Motor neuron (in vitro differentiated cells): ENCODE measurements at regions of chr18 and their contacts with region 1.

Region 1: GRCh38 chr18:8608795-8609658 is at the start of gene RAB12:
- ATAC-seq: peak; percentile 82 to 97 (median 92)
- H3K4me3 ChIP-seq: peak within 1 kb of the TSS; percentile 55 to 86 (median 75)
- H3K27ac ChIP-seq: peak within 1 kb of the TSS; percentile 75 to 80
- H3K4me1 ChIP-seq: peaks cover 10 to 13% of the 10 kb centered on the region in 2 donors
- total RNA-seq, gene RAB12: 18.5 to 70.6 (median 28.2) TPM

Region 2: DNA sequence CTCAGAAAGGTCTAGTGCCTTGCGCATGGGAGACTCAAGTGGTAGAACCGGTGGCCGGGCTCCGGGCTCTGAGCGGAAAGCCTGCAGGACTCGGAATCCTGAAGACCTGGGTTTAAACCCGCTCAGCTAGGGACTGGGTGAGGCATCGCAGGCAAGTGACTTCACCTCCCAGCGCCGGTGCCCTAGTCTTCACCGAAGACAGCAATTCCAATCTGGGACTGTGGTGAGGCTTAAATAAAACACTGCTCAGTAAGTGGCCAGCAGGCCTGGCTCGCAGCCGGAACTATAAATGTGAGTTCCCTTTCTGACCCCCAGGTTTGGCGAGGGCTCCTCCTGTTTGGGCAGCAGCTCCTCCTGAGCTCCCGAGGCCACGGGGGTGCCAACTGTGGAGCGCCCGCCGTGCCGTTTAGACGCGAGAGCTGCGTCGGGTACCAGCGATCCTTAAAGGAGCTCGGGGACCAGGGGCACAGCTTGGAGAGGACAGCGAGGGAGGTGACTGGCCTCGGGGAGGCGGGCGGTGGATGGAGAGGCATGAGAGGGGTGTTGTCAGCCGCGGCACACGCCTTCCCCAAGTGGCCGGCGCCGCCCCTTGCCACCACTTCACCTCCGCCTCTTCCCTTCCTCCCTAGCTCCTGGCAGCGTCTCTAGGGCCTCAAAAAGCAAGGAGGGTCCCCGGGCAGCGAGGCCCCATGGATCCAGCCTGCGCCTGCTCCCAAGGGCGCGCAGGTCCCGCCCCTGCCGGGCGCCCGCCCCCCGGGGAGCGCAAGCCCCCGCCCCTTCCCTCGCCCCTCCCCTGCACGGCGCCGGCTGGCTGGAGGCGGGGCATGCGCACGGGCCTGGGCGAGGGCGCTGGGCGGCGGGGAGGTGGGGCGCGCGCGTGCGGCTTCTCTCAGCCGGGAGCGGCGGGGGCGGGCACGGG is 95.6 kb after region 1 on chr18:
- in situ Hi-C with region 1: loop called in 1 of 9 experiments (anchors 25 kb)
- ATAC-seq: peak; percentile 61 to 84 (median 79)
- H3K4me3 ChIP-seq: peak overlapping the region; percentile 53 to 73 (median 63)
- H3K27ac ChIP-seq: peak overlapping the region; percentile 23 to 89
- H3K4me1 ChIP-seq: peaks cover 2 to 4% of the 10 kb centered on the region in 2 donors